ENCODE measurements at regions of chr10 and their contacts with region 1.

Region 1: DNA sequence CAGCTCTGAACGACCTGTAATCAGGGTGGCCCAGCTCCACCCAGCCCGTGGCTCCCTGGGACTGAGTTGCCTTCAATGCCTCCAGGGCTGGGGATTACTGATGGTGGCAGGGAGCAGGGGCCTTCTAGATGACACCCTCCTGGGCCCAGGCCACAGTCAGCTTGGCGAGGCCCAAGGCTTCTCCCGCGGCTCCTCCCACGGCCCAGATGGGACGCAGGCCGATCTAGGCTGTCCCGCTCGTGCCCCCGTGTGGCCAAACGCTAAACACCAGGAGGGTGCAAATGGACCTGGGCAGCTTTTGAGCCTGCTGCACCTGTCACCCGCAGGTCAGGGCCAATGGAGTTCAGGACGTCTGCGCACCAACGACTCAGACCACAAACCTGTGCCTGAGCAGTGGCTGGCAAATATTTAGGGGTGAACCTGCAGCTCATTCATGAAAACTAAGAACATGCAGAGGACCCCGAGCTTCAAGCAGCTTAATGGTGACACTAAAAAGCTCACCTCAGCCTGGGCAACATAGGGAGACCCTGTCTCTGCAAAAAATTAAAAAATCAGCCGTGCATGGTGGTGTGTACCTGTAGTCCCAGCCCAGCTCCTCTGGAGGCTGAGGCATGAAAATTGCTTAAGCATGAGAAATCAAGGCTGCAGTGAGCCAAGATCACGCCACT is 43.2 kb downstream of the ASB13 start:
- DNase-seq: peak; percentile 88

Region 2: DNA sequence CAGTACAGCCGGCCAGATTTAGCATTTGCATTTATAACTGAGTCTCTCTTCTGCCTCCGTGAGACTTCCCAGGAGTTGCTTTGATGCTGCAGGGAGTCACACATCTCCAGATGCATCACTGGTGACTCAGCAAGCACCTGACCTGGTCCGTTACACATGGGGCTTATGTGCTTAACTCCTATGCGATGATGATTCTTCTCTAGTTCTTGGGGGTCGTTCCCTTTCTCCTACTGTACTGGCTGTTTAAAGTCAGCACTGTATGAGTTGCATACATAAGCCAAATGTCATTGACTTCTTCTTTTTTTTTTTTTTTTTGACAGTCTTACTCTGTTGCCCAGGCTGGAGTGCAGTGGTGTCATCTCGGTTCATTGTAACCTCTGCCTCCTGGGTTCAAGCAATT is 810.2 kb before region 1 on chr10:
- CTCF ChIA-PET with region 1: interaction called, 10 read pairs
- POLR2A ChIA-PET with region 1: no interaction called
- DNase-seq: no peak

Region 3: DNA sequence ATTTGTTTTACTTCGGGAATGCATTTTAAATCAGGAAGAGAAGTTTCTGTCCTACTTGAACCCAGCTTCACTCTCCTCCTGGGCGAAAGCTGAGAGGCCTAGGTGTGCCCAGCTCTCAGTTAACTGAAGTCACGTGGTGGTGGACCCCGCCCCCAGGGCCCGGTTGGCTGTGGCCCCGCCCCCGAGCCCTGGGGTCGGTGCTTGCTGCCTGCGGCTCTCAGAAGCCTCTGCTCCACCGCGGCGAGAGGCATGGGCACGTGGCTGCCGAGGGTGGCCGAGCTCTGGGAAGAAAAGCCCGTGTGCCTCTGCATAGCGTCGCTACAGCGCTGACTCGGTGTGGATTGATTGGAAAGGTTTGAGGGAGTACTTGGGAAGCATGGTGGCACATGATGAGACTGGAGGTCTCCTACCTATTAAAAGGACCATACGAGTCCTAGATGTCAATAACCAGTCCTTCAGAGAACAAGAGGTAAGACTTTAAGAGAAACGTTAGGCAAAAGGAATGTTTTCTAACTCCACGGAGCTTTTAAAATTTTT is 176.8 kb before region 1 on chr10:
- CTCF ChIA-PET with region 1: interaction called, 30 read pairs
- POLR2A ChIA-PET with region 1: interaction called, 5 read pairs
- DNase-seq: peak; percentile 90

Region 4: DNA sequence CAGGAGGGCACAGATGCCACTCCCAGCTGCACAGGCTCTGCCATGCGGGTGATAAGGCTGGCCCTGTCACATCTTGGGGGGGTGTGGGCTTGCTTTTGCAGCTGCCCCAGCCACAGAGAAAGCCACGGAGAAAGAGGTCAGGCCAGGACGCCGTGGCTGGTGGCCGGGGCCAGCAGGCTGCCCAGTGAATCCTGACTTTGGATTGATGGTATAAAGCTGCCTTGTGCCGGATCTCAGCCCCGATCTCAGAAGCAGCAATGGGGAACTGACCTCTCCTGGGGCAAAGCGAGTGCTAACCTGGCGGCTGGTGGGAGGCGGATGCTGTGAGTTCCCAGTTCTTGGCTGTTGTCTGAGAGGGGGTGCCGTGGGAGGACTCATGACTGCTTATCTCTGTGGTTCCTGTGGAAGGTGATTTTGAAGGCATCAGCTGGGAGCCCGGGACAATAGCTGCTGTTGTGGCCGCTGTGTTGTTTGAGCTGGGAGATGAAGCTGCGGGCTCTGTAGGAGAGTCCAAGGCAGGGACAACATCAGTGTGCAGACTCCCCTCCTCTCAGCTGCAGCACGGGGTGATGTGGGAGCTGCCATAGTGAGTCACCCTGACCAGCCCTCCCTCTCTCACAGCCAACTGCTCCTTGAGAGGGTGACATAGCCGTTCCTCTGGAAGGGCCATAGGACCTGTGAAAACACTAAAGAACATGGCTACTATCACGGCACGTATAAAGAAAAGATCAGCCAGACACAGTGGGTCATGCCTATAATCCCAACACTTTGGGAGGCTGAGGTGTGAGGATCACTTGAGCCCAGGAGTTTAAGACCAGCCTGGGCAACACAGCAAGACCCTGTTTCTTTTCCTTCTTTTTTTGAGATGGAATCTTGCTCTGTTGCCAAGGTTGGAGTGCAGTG is 337.1 kb after region 1 on chr10:
- CTCF ChIA-PET with region 1: no interaction called
- POLR2A ChIA-PET with region 1: no interaction called
- DNase-seq: no peak

Measured in HEK293T (cell line).